ENCODE measurements at regions of chr2 and their contacts with region 1.

Region 1: DNA sequence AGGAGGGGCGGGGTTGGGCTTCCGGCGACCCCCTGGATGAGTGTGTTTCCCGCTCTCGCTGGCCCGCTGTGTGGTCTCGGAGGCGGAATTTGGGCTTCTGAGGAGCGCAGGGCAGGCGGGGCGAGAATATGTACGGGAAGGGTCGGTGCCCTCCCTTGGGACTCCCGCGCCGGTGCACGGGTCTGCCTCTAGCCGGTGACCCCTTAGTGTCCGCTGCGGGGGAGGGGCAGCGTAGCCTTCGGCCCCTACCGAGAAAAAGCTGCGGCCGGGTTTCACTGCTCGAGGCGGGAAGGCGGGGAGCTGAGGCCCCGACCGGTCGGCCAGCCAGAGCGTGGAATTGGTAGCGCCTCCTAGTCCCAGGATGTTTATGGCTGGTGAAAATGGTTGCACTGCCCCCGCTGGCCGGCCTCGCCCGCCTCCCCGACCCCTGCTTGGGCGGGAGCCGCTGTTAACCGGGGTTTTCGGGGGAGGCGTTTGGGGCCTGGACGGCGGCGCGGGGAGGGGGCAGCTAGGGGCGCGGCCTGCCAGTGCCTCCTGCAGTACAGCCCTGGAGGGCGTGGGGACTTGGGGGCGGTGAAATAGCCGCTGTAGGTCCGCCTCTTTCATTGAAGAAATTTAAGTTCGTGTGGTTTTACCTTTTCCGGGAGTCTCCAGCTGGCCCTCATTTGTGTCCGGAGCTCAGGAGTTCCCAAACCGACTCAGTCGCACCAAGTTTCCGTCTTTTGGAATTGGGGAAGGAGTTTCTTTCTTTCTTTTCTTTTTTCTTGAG is at the start of gene UGP2:
- DNase-seq: peak; percentile 59 to 81 (median 72)
- H3K4me3 ChIP-seq: peak within 1 kb of the TSS; percentile 72 to 92 (median 87)
- H3K4me3 Mint-ChIP-seq: peak within 1 kb of the TSS; percentile 97 to 98
- H3K27ac ChIP-seq: peak within 1 kb of the TSS; percentile 93 to 95
- H3K27ac Mint-ChIP-seq: peak within 1 kb of the TSS; percentile 95 to 99 (median 98)
- H3K4me1 ChIP-seq: peaks cover 28 to 40% of the 10 kb centered on the region in 2 donors
- H3K4me1 Mint-ChIP-seq: peaks cover 53% of the 10 kb centered on the region
- H3K27me3 ChIP-seq: no peaks in the 10 kb centered on the region
- H3K27me3 Mint-ChIP-seq: no peaks in the 10 kb centered on the region
- CTCF ChIP-seq: no peak
- polyA plus RNA-seq, gene UGP2: 22.3 to 71.8 (median 49.9) TPM

Region 2: GRCh38 chr2:63588385-63589147 is 252.9 kb before region 1 on chr2 and contains the starts of genes MDH1 and WDPCP:
- intact Hi-C with region 1: loop called (anchors 5 to 10 kb)
- DNase-seq: peak; percentile 96 to 98 (median 97)
- H3K4me3 ChIP-seq: peak within 1 kb of the TSS; percentile 65 to 90 (median 66)
- H3K4me3 Mint-ChIP-seq: peak within 1 kb of the TSS; percentile 99
- H3K27ac ChIP-seq: peak within 1 kb of the TSS; percentile 94 to 96
- H3K27ac Mint-ChIP-seq: peak within 1 kb of the TSS; percentile 98 to 100 (median 99)
- H3K4me1 ChIP-seq: peaks cover 36 to 44% of the 10 kb centered on the region in 2 donors
- H3K4me1 Mint-ChIP-seq: peaks cover 38% of the 10 kb centered on the region
- H3K27me3 ChIP-seq: no peaks in the 10 kb centered on the region
- H3K27me3 Mint-ChIP-seq: peaks cover 0 to 1% (median 0%) of the 10 kb centered on the region in 3 donors
- CTCF ChIP-seq: no peak
- polyA plus RNA-seq, gene MDH1: 63.2 to 218 (median 197) TPM
- polyA plus RNA-seq, gene WDPCP: 3.3 to 5.2 (median 3.7) TPM

Region 3: GRCh38 chr2:63862806-63863205 is 21.4 kb after region 1 on chr2:
- intact Hi-C with region 1: no loop called
- DNase-seq: no peak
- H3K4me3 ChIP-seq: no peak overlapping the region
- H3K4me3 Mint-ChIP-seq: no peak overlapping the region
- H3K27ac ChIP-seq: peak overlapping the region in 1 of 2 donors; percentile 10
- H3K27ac Mint-ChIP-seq: no peak overlapping the region
- H3K4me1 ChIP-seq: no peaks in the 10 kb centered on the region
- H3K4me1 Mint-ChIP-seq: peaks cover 5% of the 10 kb centered on the region
- H3K27me3 ChIP-seq: no peaks in the 10 kb centered on the region
- H3K27me3 Mint-ChIP-seq: no peaks in the 10 kb centered on the region
- CTCF ChIP-seq: no peak